ENCODE measurements at regions of chr1 and their contacts with region 1.

Region 1: DNA sequence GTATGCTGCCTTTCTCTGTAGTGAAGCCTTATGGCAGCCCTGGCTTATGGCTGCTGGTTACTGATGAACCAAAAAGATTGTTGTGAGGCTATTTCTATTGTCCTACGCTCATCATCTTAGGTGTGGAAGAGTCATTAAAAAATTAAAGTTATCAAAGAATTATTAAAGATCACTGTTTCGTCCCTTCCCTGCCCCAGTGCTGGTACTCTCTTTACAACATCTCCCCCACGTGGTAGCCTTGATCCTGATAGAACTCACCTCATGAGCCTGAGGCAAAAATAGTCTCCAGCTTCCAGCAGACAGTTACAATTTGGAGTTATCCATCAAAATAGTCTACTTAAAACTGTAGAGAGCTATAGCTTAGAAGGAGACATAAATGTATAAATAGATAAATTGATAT is 201.5 kb downstream of the S1PR1 start:
- DNase-seq: no peak
- ATAC-seq: peak; percentile 73
- H3K4me3 ChIP-seq: no peak overlapping the region
- H3K27ac ChIP-seq: peak overlapping the region; percentile 90
- H3K4me1 ChIP-seq: peaks cover 46% of the 10 kb centered on the region
- H3K27me3 ChIP-seq: no peaks in the 10 kb centered on the region
- CTCF ChIP-seq: peak; percentile 67 to 86 (median 74)
- EP300 ChIP-seq: no peak
- POLR2A ChIP-seq: no peak
- RAD21 ChIP-seq: peak; percentile 97

Region 2: GRCh38 chr1:100928128-100928527 is 510.2 kb before region 1 on chr1:
- CTCF ChIA-PET with region 1: interaction called, 9 read pairs
- POLR2A ChIA-PET with region 1: no interaction called
- RAD21 ChIA-PET with region 1: interaction called, 10 read pairs
- SMC1A ChIA-PET with region 1: interaction called, 29 read pairs
- in situ Hi-C with region 1: loop called (anchors 10 kb)
- intact Hi-C with region 1: no loop called
- DNase-seq: no peak
- ATAC-seq: peak; percentile 47; the same call in 2 of the 3 replicates
- H3K4me3 ChIP-seq: no peak overlapping the region
- H3K27ac ChIP-seq: no peak overlapping the region
- H3K4me1 ChIP-seq: peaks cover 4% of the 10 kb centered on the region; the same call in 1 of the 2 replicates
- H3K27me3 ChIP-seq: no peaks in the 10 kb centered on the region
- CTCF ChIP-seq: no peak
- EP300 ChIP-seq: no peak
- POLR2A ChIP-seq: no peak
- RAD21 ChIP-seq: no peak

Region 3: GRCh38 chr1:101247404-101248287 is 190.7 kb before region 1 on chr1:
- CTCF ChIA-PET with region 1: interaction called, 13 read pairs
- POLR2A ChIA-PET with region 1: no interaction called
- RAD21 ChIA-PET with region 1: interaction called, 11 read pairs
- SMC1A ChIA-PET with region 1: interaction called, 7 read pairs
- in situ Hi-C with region 1: no loop called
- intact Hi-C with region 1: no loop called
- DNase-seq: peak; percentile 94
- ATAC-seq: peak; percentile 93
- H3K4me3 ChIP-seq: peak overlapping the region; percentile 10; the same call in 1 of the 2 replicates
- H3K27ac ChIP-seq: peak overlapping the region; percentile 76
- H3K4me1 ChIP-seq: peaks cover 31% of the 10 kb centered on the region
- H3K27me3 ChIP-seq: no peaks in the 10 kb centered on the region
- CTCF ChIP-seq: no peak
- EP300 ChIP-seq: peak; percentile 37 to 61; a peak in 3 of 4 replicates
- POLR2A ChIP-seq: no peak
- RAD21 ChIP-seq: peak; percentile 35

Region 4: DNA sequence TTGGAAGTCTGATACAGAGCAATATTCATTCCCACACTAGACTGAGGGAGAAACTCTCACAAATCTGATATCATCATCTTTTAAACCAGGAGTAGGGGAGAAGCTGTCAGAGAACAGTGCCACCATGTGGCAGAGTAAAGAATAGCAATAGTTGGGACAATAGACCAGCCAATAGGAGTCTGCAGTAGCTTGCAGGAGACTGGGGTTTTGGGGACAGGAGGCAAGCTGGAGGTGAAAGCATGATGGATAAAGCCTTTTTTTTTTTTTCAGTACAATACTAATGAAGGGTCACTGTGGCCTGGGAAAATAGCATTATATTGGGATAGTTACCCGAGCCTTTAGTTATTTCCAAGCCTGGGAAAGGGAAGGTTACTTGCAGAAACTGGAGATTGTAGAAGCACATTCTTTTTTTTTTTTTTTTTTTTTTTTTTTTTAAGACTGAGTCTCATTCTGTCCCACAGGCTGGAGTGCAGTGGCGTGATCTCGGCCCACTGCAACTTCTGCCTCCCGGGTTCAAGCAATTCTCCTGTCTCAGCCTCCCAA is 80.8 kb before region 1 on chr1:
- CTCF ChIA-PET with region 1: interaction called, 74 read pairs
- POLR2A ChIA-PET with region 1: interaction called, 9 read pairs
- RAD21 ChIA-PET with region 1: interaction called, 66 read pairs
- SMC1A ChIA-PET with region 1: interaction called, 58 read pairs
- in situ Hi-C with region 1: no loop called
- intact Hi-C with region 1: loop called (anchors 1 kb)
- DNase-seq: peak; percentile 95
- ATAC-seq: peak; percentile 99
- H3K4me3 ChIP-seq: no peak overlapping the region
- H3K27ac ChIP-seq: peak overlapping the region; percentile 75
- H3K4me1 ChIP-seq: peaks cover 7% of the 10 kb centered on the region; the same call in 1 of the 2 replicates
- H3K27me3 ChIP-seq: no peaks in the 10 kb centered on the region
- CTCF ChIP-seq: peak; percentile 79 to 92 (median 89)
- EP300 ChIP-seq: no peak
- POLR2A ChIP-seq: no peak
- RAD21 ChIP-seq: peak; percentile 93

Region 5: GRCh38 chr1:101379950-101380349 is 58.4 kb before region 1 on chr1:
- CTCF ChIA-PET with region 1: interaction called, 25 read pairs
- POLR2A ChIA-PET with region 1: interaction called, 4 read pairs
- RAD21 ChIA-PET with region 1: interaction called, 20 read pairs
- SMC1A ChIA-PET with region 1: interaction called, 14 read pairs
- in situ Hi-C with region 1: no loop called
- intact Hi-C with region 1: no loop called
- DNase-seq: peak; percentile 80
- ATAC-seq: peak; percentile 95
- H3K4me3 ChIP-seq: 0 out of 2 replicates have a peak overlapping the region, but pooled peaks have one; percentile 16
- H3K27ac ChIP-seq: peak overlapping the region; percentile 91
- H3K4me1 ChIP-seq: peaks cover 32% of the 10 kb centered on the region
- H3K27me3 ChIP-seq: no peaks in the 10 kb centered on the region
- CTCF ChIP-seq: no peak
- EP300 ChIP-seq: no peak
- POLR2A ChIP-seq: no peak
- RAD21 ChIP-seq: 0 out of 2 replicates have a peak, but pooled peaks have one; percentile 2

Region 6: GRCh38 chr1:101399222-101399621 is 39.1 kb before region 1 on chr1:
- CTCF ChIA-PET with region 1: interaction called, 323 read pairs
- POLR2A ChIA-PET with region 1: interaction called, 3 read pairs
- RAD21 ChIA-PET with region 1: interaction called, 13 read pairs
- SMC1A ChIA-PET with region 1: interaction called, 8 read pairs
- in situ Hi-C with region 1: no loop called
- intact Hi-C with region 1: no loop called
- DNase-seq: no peak
- ATAC-seq: peak; percentile 14
- H3K4me3 ChIP-seq: no peak overlapping the region
- H3K27ac ChIP-seq: peak overlapping the region; percentile 74
- H3K4me1 ChIP-seq: peaks cover 13% of the 10 kb centered on the region; the same call in 1 of the 2 replicates
- H3K27me3 ChIP-seq: no peaks in the 10 kb centered on the region
- CTCF ChIP-seq: no peak
- EP300 ChIP-seq: no peak
- POLR2A ChIP-seq: no peak
- RAD21 ChIP-seq: no peak

Region 7: DNA sequence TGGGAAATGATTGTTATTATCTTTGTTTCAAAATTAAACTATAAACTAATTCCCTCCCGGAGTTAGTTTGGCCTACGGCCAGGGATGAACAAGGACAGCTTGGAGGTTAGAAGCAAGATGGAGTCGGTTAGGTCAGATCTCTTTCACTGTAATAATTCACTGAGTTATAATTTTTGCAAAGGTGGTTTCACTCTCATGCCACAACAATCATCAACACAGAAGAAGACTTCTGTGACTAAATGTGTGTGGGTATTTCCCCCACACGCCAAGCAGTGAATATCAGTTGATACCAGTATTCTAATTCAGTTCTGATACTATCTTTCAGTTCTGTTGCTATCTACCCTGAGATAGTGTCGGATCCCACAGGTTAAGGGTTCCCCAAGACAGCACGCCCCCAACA is 13.5 kb after region 1 on chr1:
- CTCF ChIA-PET with region 1: interaction called, 31 read pairs
- POLR2A ChIA-PET with region 1: interaction called, 6 read pairs
- RAD21 ChIA-PET with region 1: interaction called, 7 read pairs
- SMC1A ChIA-PET with region 1: interaction called, 22 read pairs
- in situ Hi-C with region 1: no loop called
- intact Hi-C with region 1: no loop called
- DNase-seq: no peak
- ATAC-seq: peak; percentile 78
- H3K4me3 ChIP-seq: no peak overlapping the region
- H3K27ac ChIP-seq: peak overlapping the region; percentile 77
- H3K4me1 ChIP-seq: peaks cover 44% of the 10 kb centered on the region
- H3K27me3 ChIP-seq: no peaks in the 10 kb centered on the region
- CTCF ChIP-seq: no peak
- EP300 ChIP-seq: no peak
- POLR2A ChIP-seq: no peak
- RAD21 ChIP-seq: no peak

Measured in GM12878 (cell line).